Activated naive CD4-positive, alpha-beta T cell treated with anti-CD3 and anti-CD28 coated beads for 36 hours (primary cell): ENCODE measurements at regions of chr4 and their contacts with region 1.

Region 1: DNA sequence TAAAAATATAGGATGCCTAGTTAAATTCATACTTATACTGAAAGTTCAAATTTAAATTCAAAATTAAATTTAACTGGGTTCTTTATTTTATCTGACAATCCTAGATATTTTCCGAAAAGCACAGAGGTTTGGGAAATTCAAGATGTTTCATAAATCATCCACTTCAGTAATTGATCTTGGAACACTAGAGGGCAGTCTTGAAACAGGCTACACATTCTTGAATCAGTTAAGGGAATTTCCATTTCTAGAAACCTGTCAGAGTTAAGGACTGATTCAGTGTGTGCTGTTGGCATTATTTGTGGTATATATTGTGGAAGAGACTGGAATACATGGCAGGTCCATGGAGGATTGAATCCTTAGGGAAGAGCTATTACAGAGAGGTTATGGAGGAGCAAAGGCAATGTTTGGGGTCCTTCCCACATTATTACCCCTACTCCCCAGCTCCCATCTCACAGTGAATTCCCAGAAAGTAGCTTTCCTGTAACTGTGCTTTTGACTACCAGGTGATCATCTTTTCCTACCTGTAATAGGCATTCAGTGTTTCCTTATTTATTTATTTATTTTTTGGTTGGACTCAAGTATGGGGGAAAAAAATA is 92.9 kb downstream of the EGF start:
- DNase-seq: no peak
- H3K4me3 Mint-ChIP-seq: no peak overlapping the region
- H3K27ac Mint-ChIP-seq: no peak overlapping the region
- H3K4me1 Mint-ChIP-seq: peaks cover 8% of the 10 kb centered on the region
- H3K27me3 Mint-ChIP-seq: peaks cover 3% of the 10 kb centered on the region

Region 2: DNA sequence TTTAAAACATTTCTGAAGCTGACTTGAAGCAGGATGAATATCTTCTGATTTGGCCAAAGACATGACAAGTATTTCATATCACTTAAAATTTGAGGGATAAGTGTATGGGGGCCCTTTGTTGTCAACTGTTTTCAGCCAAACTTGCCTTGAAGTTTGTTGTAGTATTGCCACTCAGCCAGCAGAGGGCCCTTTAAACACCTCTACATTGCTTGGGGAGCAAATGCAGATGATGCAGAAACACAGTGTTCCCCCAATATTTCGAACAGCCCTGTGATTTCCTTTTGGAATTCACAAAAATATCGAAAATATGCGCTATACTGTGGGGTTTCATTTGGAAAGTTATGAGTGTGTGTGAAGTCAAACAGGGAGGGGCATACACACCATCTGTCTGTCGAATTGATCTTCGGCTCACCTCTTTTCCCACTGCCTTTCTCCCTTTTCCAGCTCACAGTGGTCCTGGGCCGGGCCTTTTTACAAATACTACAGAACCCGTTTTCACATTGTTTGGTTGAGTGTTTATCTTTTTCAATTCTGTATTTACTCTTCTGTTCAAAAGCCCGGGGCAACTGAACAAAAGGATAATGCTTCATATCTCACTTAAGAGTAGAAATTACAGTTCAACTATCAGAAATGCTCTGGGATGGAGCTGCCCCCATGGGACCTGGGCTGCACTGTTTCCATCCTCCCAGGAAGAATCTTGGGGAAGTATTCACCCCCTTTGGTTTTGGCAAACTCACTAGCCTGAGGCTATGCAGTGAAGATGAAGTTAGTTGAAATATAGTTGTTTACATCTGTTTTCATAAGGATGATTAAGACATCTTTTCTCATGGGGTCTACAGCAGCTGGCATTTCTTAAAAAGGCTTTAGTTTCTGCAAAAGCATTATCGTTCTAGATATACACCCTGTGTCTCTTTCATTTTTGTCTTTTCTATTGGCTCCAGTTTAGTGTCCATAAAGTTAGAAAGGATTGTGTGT is 44.7 kb after region 1 on chr4:
- CTCF ChIA-PET with region 1: interaction called, 7 read pairs
- intact Hi-C with region 1: loop called (anchors 2 kb)
- DNase-seq: peak; percentile 71
- H3K4me3 Mint-ChIP-seq: no peak overlapping the region
- H3K27ac Mint-ChIP-seq: no peak overlapping the region
- H3K4me1 Mint-ChIP-seq: no peaks in the 10 kb centered on the region
- H3K27me3 Mint-ChIP-seq: no peaks in the 10 kb centered on the region

Region 3: GRCh38 chr4:110211007-110211769 is 205.6 kb after region 1 on chr4:
- CTCF ChIA-PET with region 1: interaction called, 7 read pairs
- intact Hi-C with region 1: loop called (anchors 1 kb)
- DNase-seq: peak; percentile 38
- H3K4me3 Mint-ChIP-seq: no peak overlapping the region
- H3K27ac Mint-ChIP-seq: no peak overlapping the region
- H3K4me1 Mint-ChIP-seq: no peaks in the 10 kb centered on the region
- H3K27me3 Mint-ChIP-seq: no peaks in the 10 kb centered on the region

Region 4: GRCh38 chr4:110310795-110311194 is 305.2 kb after region 1 on chr4:
- CTCF ChIA-PET with region 1: interaction called, 3 read pairs
- intact Hi-C with region 1: loop called (anchors 2 kb)
- DNase-seq: no peak
- H3K4me3 Mint-ChIP-seq: no peak overlapping the region
- H3K27ac Mint-ChIP-seq: no peak overlapping the region
- H3K4me1 Mint-ChIP-seq: no peaks in the 10 kb centered on the region
- H3K27me3 Mint-ChIP-seq: peaks cover 20% of the 10 kb centered on the region

Region 5: GRCh38 chr4:110510955-110511544 is 505.5 kb after region 1 on chr4:
- CTCF ChIA-PET with region 1: interaction called, 371 read pairs
- intact Hi-C with region 1: loop called (anchors 1 kb)
- DNase-seq: no peak
- H3K4me3 Mint-ChIP-seq: no peak overlapping the region
- H3K27ac Mint-ChIP-seq: no peak overlapping the region
- H3K4me1 Mint-ChIP-seq: peaks cover 9% of the 10 kb centered on the region
- H3K27me3 Mint-ChIP-seq: no peaks in the 10 kb centered on the region

Region 6: DNA sequence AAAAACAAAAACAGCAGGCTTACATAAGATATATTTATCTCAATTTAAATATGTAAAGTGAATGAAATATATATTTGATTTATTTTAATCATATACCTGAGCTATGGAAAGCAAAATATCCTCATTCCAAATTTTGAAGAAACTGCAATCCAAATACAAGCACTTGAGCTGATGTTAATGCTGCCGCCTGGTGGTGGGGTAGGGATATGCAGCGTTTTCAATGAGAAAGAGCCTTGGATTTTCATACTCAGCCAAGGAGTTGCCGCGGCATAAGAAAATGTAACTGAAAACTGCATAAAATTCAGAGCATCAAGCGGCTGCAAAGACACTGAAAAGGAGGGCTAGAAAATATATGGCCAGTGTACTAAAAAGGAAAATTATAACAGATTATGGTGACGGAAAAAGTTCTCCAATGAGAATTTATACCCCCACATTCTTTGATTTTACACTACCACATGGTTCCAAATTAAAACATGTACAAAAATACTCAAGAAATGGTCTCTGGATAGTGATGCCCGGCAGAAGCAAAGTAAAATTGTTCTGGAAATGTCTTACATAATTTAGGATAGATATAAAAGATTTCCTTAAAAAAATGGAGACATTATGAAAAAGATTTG is 1277.6 kb after region 1 on chr4:
- CTCF ChIA-PET with region 1: no interaction called
- intact Hi-C with region 1: loop called (anchors 10 kb)
- DNase-seq: peak; percentile 64
- H3K4me3 Mint-ChIP-seq: no peak overlapping the region
- H3K27ac Mint-ChIP-seq: no peak overlapping the region
- H3K4me1 Mint-ChIP-seq: no peaks in the 10 kb centered on the region
- H3K27me3 Mint-ChIP-seq: no peaks in the 10 kb centered on the region